Psoas muscle (tissue), 8 donors: ENCODE measurements at regions of chr2 and their contacts with region 1.

Region 1: GRCh38 chr2:216023055-216023648 is 9.8 kb upstream of the MREG start:
- DNase-seq: no peak
- ATAC-seq: peak in 1 of 4 donors; percentile 62
- H3K4me3 ChIP-seq: no peak overlapping the region
- H3K27ac ChIP-seq: no peak overlapping the region
- H3K4me1 ChIP-seq: no peaks in the 10 kb centered on the region
- H3K27me3 ChIP-seq: no peaks in the 10 kb centered on the region
- CTCF ChIP-seq: peak; percentile 53

Region 2: GRCh38 chr2:215949991-215950404 is 73.2 kb before region 1 on chr2:
- intact Hi-C with region 1: loop called in 1 of 2 experiments (anchors 2 kb)
- DNase-seq: no peak
- ATAC-seq: no peak
- H3K4me3 ChIP-seq: no peak overlapping the region
- H3K27ac ChIP-seq: no peak overlapping the region
- H3K4me1 ChIP-seq: no peaks in the 10 kb centered on the region
- H3K27me3 ChIP-seq: no peaks in the 10 kb centered on the region
- CTCF ChIP-seq: peak; percentile 48